ENCODE measurements at regions of chr12 and their contacts with region 1.

Region 1: DNA sequence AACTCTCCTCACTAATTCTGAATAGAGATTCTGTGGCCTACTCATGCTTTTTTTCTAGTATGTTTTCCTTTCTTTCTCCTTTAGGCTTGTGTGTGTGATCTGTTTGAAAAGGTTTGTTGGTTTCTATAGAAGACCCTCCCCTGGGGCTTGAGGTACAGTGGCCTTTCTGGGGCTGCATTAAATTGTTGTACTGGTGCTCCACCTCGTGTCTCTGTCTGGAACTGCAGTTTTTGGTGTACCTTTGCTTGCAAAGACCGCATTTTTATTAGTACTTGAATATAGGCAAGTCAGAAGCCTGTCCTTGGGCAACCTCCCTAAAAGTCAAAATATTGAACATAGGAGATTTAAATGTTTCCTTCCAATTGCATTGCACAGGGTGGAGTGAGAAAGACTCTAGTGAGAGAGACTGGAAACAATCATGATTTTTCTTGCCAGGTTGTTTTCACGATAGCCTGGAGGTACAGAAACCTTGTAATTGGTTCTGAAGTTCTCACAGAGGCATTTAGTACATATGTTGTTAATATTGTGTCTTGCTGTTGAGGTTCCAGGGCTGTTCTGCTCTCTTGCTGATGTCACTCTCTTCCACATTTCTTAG is 39.0 kb downstream of the SLCO1B1 start:
- DNase-seq: peak; percentile 44 to 53
- H3K4me3 ChIP-seq: no peak overlapping the region
- H3K27ac ChIP-seq: no peak overlapping the region
- H3K4me1 ChIP-seq: no peaks in the 10 kb centered on the region
- H3K27me3 ChIP-seq: no peaks in the 10 kb centered on the region
- CTCF ChIP-seq: peak; percentile 96

Region 2: DNA sequence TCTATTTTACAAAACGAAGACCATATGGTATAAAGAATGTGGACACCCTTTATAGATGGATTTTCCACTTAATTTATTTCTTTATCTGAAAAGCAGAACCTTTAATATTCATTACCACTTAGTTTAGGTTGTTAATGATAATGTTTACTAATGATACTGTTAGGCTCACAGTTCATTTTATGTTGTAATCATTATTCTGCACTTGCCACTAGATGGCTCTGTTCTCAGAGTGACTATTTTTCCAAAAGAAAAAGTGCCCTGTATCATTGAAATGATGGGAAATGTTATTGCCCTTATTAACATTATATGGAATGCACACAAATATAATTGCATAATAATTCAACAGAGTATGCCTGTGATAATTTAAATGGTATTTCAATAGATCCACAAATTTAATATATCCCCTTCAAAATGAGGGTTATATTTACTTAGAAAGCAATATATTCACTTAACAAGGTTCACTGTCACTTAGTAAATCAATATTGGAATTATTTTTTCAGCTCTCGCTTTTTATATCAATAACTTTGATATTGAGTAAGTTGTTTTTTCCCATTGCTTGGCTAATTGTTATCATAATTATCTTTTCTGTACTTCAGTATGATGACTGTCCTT is 706.0 kb before region 1 on chr12:
- CTCF ChIA-PET with region 1: no interaction called
- POLR2A ChIA-PET with region 1: no interaction called
- intact Hi-C with region 1: loop called (anchors 10 kb)
- DNase-seq: no peak
- H3K4me3 ChIP-seq: no peak overlapping the region
- H3K27ac ChIP-seq: no peak overlapping the region
- H3K4me1 ChIP-seq: no peaks in the 10 kb centered on the region
- H3K27me3 ChIP-seq: no peaks in the 10 kb centered on the region
- CTCF ChIP-seq: peak; percentile 68

Region 3: GRCh38 chr12:20731274-20731673 is 438.7 kb before region 1 on chr12:
- CTCF ChIA-PET with region 1: no interaction called
- POLR2A ChIA-PET with region 1: no interaction called
- intact Hi-C with region 1: loop called (anchors 2 kb)
- DNase-seq: no peak
- H3K4me3 ChIP-seq: no peak overlapping the region
- H3K27ac ChIP-seq: no peak overlapping the region
- H3K4me1 ChIP-seq: no peaks in the 10 kb centered on the region
- H3K27me3 ChIP-seq: no peaks in the 10 kb centered on the region
- CTCF ChIP-seq: no peak